ENCODE measurements at regions of chr11 and their contacts with region 1.

Region 1: GRCh38 chr11:30322826-30323710 is at the start of gene ARL14EP:
- DNase-seq: peak; percentile 86 to 90 (median 88)
- H3K4me3 ChIP-seq: peak within 1 kb of the TSS; percentile 74 to 92
- H3K4me3 Mint-ChIP-seq: peak within 1 kb of the TSS; percentile 99 to 100 (median 99)
- H3K27ac ChIP-seq: peak within 1 kb of the TSS; percentile 94
- H3K27ac Mint-ChIP-seq: peak within 1 kb of the TSS; percentile 99 to 100 (median 99)
- H3K4me1 ChIP-seq: peaks cover 50% of the 10 kb centered on the region
- H3K4me1 Mint-ChIP-seq: peaks cover 33 to 58% (median 47%) of the 10 kb centered on the region in 4 donors
- H3K27me3 ChIP-seq: no peaks in the 10 kb centered on the region
- H3K27me3 Mint-ChIP-seq: peaks cover 2 to 6% of the 10 kb centered on the region in 2 donors
- total RNA-seq, gene ARL14EP: 44.3 to 50.1 TPM

Region 2: DNA sequence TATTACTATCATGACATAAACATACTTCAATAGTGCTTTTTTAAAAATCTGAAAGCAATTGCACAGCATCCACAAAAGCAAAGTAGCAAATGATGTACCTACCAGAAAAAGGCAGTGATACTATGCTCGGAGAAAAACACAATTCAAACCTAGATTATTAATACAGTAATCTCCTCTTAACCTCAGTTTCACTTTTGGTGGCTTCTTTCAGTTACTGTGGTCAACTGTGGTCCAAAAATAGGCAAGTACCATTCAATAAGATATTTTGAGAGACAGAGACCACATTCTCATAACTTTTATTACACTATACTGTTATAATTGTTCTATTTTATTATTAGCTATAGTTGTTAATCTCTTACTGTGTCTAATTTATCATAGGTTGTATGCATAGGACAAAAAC is 327.1 kb before region 1 on chr11:
- CTCF ChIA-PET with region 1: no interaction called
- POLR2A ChIA-PET with region 1: no interaction called
- intact Hi-C with region 1: no loop called
- DNase-seq: no peak
- H3K4me3 ChIP-seq: no peak overlapping the region
- H3K4me3 Mint-ChIP-seq: no peak overlapping the region
- H3K27ac ChIP-seq: no peak overlapping the region
- H3K27ac Mint-ChIP-seq: no peak overlapping the region
- H3K4me1 ChIP-seq: no peaks in the 10 kb centered on the region
- H3K4me1 Mint-ChIP-seq: no peaks in the 10 kb centered on the region
- H3K27me3 ChIP-seq: no peaks in the 10 kb centered on the region
- H3K27me3 Mint-ChIP-seq: no peaks in the 10 kb centered on the region

Region 3: DNA sequence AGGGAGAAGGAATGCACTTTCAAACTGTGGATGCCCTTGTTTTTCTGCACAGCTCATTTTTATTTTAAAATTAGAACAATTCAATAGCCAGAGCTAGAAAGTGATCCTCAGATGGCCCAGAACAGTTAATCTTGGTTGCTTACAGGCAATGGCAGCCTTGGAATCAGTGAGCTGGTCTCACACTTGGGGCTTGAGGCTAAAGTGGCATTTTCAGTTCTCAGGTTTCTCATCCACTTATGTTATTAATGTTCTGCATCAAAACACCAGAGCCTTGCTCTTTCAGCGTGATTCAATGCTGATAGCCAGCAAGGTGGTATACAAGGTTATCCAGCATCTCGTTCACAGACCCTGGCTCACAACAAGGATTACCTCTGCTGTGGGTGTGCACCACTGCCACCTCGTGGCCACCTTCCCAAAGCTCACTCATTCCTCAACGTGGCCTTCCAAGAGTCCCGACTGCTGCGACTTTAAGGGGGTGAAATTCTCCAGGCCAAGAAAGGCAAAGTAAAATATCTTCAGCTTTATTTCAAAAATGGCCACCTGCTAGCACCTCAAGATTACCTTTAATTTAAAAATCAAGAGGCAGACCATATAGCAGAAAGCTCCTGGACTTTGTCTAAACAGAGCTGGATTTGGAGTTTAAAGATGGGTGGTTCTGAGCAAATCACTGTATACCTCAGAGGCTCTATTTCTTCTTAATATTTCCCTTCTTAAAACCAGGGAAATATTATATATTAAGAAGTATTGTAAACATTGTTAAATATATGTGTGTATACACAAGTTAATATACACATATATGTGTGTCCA is 126.5 kb before region 1 on chr11:
- CTCF ChIA-PET with region 1: no interaction called
- POLR2A ChIA-PET with region 1: no interaction called
- intact Hi-C with region 1: loop called (anchors 10 kb)
- DNase-seq: peak in 4 of 5 donors; percentile 2 to 19 (median 14)
- H3K4me3 ChIP-seq: no peak overlapping the region
- H3K4me3 Mint-ChIP-seq: no peak overlapping the region
- H3K27ac ChIP-seq: no peak overlapping the region
- H3K27ac Mint-ChIP-seq: no peak overlapping the region
- H3K4me1 ChIP-seq: no peaks in the 10 kb centered on the region
- H3K4me1 Mint-ChIP-seq: no peaks in the 10 kb centered on the region
- H3K27me3 ChIP-seq: no peaks in the 10 kb centered on the region
- H3K27me3 Mint-ChIP-seq: peaks cover 0 to 3% of the 10 kb centered on the region in 2 donors

Region 4: GRCh38 chr11:30333405-30333804 is 10.3 kb after region 1 on chr11:
- CTCF ChIA-PET with region 1: interaction called, 10 read pairs
- POLR2A ChIA-PET with region 1: interaction called, 11 read pairs
- intact Hi-C with region 1: no loop called
- DNase-seq: no peak
- H3K4me3 ChIP-seq: no peak overlapping the region
- H3K4me3 Mint-ChIP-seq: no peak overlapping the region
- H3K27ac ChIP-seq: no peak overlapping the region
- H3K27ac Mint-ChIP-seq: peak overlapping the region in 3 of 7 donors; percentile 7 to 72 (median 70)
- H3K4me1 ChIP-seq: peaks cover 21% of the 10 kb centered on the region
- H3K4me1 Mint-ChIP-seq: peaks cover 20 to 37% (median 24%) of the 10 kb centered on the region in 4 donors
- H3K27me3 ChIP-seq: no peaks in the 10 kb centered on the region
- H3K27me3 Mint-ChIP-seq: no peaks in the 10 kb centered on the region

Measured in CD4-positive, alpha-beta memory T cell (primary cell).